ENCODE measurements at regions of chr10 and their contacts with region 1.

Region 1: DNA sequence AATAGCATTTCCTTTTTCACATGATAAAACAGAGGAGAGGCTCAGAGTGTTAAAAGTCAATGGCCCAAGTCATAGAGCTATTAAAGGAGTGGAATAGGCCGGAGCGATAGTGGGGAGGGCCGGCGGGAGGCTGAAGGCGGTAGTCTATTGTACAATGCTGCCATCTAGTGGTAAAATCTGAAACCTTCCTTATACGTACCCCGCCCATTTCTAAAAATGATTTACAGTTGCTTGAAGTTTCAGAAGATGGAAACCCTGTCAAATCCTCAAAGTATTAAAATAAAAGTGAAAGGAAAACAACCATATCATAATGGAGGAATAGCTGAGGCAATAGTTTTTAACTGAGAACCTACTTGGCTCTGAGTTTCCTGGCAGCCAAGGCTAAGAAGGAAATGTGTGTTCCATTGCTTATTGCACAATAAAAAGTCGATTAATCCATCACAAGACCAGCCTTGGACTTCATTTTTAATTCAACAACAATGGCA is 209.1 kb downstream of the CCSER2 start:
- DNase-seq: peak; percentile 60
- ATAC-seq: peak; percentile 87 to 88
- H3K4me3 ChIP-seq: no peak overlapping the region
- H3K27ac ChIP-seq: no peak overlapping the region
- H3K4me1 ChIP-seq: peaks cover 13% of the 10 kb centered on the region
- H3K27me3 ChIP-seq: peaks cover 23% of the 10 kb centered on the region
- CTCF ChIP-seq: peak; percentile 83

Region 2: GRCh38 chr10:84375011-84375410 is 162.5 kb before region 1 on chr10:
- intact Hi-C with region 1: loop called (anchors 10 kb)
- DNase-seq: no peak
- ATAC-seq: peak in 1 of 2 donors; percentile 69
- H3K4me3 ChIP-seq: no peak overlapping the region
- H3K27ac ChIP-seq: no peak overlapping the region
- H3K4me1 ChIP-seq: peaks cover 15% of the 10 kb centered on the region
- H3K27me3 ChIP-seq: no peaks in the 10 kb centered on the region
- CTCF ChIP-seq: peak; percentile 70